ENCODE measurements at regions of chr2 and their contacts with region 1.

Region 1: DNA sequence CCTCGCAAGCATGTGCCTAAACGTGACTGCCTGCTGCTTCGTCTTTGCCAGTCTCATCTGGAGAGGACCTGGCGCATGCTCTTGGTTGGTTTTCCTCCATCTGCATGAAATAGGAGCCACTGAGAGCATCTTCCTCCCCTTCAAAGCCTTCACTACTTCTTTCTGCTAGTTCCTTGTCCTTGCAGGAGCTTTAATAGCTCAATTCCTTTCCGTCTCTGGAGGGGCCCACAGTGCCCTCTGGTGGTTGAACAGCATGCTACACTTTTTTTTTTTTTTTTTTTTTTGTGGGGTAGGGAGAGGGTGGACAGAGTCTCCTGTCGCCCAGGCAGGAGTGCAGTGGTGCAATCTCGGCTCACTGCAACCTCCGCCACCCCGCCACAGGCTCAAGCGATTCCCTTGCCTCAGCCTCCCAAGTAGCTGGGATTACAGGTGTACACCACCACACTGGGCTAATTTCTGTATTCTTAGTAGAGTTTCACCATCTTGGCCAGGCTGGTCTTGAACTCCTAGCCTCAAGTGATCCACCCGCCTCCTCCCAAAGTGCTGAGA is 59.6 kb downstream of the SP110 start:
- DNase-seq: no peak
- H3K4me3 ChIP-seq: no peak overlapping the region
- CTCF ChIP-seq: peak; percentile 63

Region 2: GRCh38 chr2:230007931-230008707 is 152.1 kb before region 1 on chr2:
- CTCF ChIA-PET with region 1: interaction called, 151 read pairs
- POLR2A ChIA-PET with region 1: no interaction called
- DNase-seq: no peak
- H3K4me3 ChIP-seq: no peak overlapping the region
- CTCF ChIP-seq: peak; percentile 67

Region 3: DNA sequence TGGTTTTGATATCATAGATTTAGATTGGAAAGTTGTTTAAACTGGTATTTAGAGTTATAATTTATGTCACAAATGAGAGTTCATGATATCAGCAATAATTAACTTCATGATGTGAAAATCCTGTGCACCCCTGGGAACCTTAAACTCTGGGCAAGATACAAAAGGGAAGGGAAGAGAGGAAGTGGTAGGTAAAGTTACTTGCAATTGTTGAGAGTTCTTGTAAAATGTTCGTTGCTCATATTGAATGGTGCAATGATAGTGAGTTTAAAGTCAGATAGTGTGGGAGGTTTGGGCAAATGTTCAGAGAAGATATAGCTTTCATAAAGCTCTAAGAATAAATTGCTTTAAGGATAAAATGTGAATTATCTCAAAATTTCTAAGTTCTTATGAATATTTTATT is 15.8 kb before region 1 on chr2:
- CTCF ChIA-PET with region 1: interaction called, 11 read pairs
- POLR2A ChIA-PET with region 1: no interaction called
- DNase-seq: no peak
- H3K4me3 ChIP-seq: no peak overlapping the region
- CTCF ChIP-seq: no peak

Region 4: DNA sequence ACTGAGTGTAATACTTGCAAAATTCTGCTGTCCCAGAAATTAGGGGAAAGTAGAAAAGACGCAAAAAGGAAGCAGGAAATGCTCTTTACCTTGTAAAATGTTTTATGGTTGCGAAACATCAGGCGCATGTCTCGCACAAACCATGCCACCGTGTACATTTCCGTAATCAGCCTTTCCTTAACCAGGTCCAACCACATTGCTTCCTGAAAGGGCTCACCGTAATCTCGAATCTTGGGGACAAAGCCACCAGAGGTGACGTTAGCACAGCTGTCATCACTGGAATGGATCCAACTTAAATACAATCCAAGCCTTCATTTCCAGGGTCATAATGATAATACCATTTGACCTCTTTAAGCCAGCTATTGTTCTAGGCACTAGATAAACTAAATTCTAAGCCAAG is 10.3 kb after region 1 on chr2:
- CTCF ChIA-PET with region 1: interaction called, 66 read pairs
- POLR2A ChIA-PET with region 1: no interaction called
- DNase-seq: no peak
- H3K4me3 ChIP-seq: no peak overlapping the region
- CTCF ChIP-seq: no peak

Measured in AG04449 (cell line).